Heart right ventricle (tissue), 16 donors: ENCODE measurements at regions of chr1 and their contacts with region 1.

Region 1: DNA sequence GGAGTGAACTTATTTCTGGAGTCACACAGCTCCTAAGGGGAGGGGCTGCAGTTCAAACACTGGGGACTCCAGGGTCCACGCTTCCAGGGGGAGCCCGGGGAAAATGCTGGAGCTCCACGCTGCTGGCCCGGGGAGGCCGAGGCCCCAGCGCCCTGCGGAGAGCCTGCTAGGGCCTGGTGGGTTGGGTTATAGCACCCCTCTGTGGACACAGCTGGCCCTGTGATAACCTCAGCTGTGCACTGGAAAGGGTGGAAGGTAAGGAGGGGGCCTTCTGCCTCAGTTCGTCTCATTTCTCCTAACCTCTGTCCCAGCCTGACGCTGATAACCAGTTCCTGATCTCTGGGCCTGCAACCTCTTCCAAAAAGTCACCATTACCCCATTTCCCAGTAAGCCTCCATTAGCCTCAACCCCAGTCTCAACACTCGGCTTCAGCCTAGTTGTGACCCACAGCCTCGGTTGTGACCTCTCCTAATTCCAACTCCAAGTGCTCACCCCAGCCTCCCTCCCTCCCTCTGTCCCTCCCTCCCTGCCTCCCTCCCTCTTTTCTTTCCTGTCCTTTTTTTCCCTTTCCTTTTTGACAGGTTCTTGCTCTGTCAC is 7.1 kb downstream of the NBL1 start:
- DNase-seq: peak; percentile 66 to 70
- ATAC-seq: peak; percentile 76 to 87 (median 83)
- H3K4me3 ChIP-seq: peak overlapping the region in 4 of 10 donors; percentile 16 to 23 (median 18)
- H3K27ac ChIP-seq: peak overlapping the region; percentile 24 to 95 (median 80)
- H3K4me1 ChIP-seq: peaks cover 25 to 100% (median 65%) of the 10 kb centered on the region in 9 donors
- H3K27me3 ChIP-seq: peaks cover 0 to 8% (median 0%) of the 10 kb centered on the region in 7 donors
- CTCF ChIP-seq: peak; percentile 54 to 84 (median 77)

Region 2: GRCh38 chr1:19251305-19252196 is 399.7 kb before region 1 on chr1 and contains the starts of genes EMC1 and MRTO4:
- intact Hi-C with region 1: loop called in 5 of 10 experiments (anchors 10 kb)
- DNase-seq: peak; percentile 88 to 89
- ATAC-seq: peak; percentile 97 to 98 (median 97)
- H3K4me3 ChIP-seq: peak within 1 kb of the TSS; percentile 71 to 91 (median 84)
- H3K27ac ChIP-seq: peak within 1 kb of the TSS; percentile 87 to 99 (median 97)
- H3K4me1 ChIP-seq: peaks cover 9 to 42% (median 32%) of the 10 kb centered on the region in 9 donors
- H3K27me3 ChIP-seq: no peaks in the 10 kb centered on the region
- CTCF ChIP-seq: no peak
- total RNA-seq, gene EMC1: 23.6 to 33.2 (median 27.6) TPM
- total RNA-seq, gene MRTO4: 8.4 to 21.0 (median 12.0) TPM

Region 3: DNA sequence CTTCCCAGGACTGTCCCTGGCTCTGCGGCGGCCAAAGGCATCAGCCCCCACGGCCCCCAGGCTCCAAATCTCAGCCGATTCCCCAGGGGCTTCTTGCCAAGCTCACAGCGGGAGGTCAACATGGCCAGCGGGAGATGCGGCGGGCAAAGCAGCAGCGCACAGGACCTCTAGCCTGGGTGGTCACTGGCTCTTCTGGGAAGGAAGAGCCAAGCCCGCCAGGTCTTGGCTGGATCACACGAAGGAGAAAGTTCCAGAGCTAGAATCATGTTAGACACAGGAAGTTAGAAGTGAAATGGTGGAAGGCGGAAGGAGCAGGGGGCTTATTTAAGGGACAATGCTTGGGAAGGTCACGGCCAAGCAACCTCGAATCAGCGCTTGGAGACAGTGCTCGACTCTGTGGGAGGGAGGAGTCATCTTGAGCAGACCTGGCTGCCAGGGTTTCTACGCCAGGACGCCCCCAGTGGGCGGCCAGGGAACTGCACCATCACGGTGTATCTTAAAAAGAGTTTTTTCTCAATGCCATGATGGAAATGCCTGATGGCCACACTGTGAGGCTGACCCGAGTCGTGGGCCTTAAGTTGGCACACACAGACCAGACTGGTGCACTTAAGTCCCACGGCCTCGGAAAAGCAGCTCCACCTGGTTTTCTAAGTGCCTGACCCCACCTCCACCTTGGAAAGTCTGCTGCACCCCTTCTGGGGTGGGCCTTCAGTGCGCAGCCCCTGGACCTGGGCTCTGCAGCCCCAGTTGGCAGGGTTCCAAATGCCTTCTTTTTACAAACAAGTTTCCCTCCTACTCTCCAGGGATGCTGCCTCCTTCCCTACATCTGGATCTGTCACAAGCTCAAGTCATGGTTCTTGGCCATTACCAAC is 309.8 kb before region 1 on chr1:
- intact Hi-C with region 1: loop called (anchors 2 to 10 kb)
- DNase-seq: peak; percentile 57 to 75
- ATAC-seq: peak; percentile 23 to 62 (median 49)
- H3K4me3 ChIP-seq: no peak overlapping the region
- H3K27ac ChIP-seq: peak overlapping the region in 5 of 10 donors; percentile 7 to 41 (median 23)
- H3K4me1 ChIP-seq: peaks cover 3 to 30% (median 15%) of the 10 kb centered on the region in 9 donors
- H3K27me3 ChIP-seq: no peaks in the 10 kb centered on the region
- CTCF ChIP-seq: peak; percentile 80 to 94 (median 84)

Region 4: GRCh38 chr1:19347533-19348172 is 303.6 kb before region 1 on chr1:
- intact Hi-C with region 1: loop called in 9 of 10 experiments (anchors 2 to 5 kb)
- DNase-seq: no peak
- ATAC-seq: no peak
- H3K4me3 ChIP-seq: no peak overlapping the region
- H3K27ac ChIP-seq: peak overlapping the region in 1 of 10 donors; percentile 36
- H3K4me1 ChIP-seq: peaks cover 0 to 23% (median 6%) of the 10 kb centered on the region in 9 donors
- H3K27me3 ChIP-seq: no peaks in the 10 kb centered on the region
- CTCF ChIP-seq: no peak

Region 5: DNA sequence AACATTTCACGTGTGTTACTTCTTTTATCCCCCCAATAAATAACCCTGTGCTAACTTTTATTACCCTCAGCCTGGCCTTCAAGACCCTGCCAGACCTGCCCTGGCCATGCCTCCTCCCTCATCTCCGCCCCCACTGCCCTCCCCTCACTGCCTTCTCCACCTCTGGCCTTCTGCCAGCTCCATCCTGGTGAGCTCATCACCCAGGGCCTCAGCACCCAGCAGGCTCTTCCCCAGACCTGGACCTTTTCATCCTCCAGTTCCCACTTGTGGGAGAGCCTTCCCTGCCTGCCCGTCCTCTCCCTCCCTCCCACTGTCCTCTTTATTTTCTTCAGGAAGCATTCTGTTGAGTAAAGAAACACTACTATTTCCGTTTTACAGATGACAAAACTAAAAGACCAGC is 267.1 kb before region 1 on chr1:
- intact Hi-C with region 1: loop called in 2 of 10 experiments (anchors 5 to 10 kb)
- DNase-seq: peak in 1 of 2 donors; percentile 60
- ATAC-seq: peak in 6 of 8 donors; percentile 39 to 76 (median 59)
- H3K4me3 ChIP-seq: no peak overlapping the region
- H3K27ac ChIP-seq: peak overlapping the region in 3 of 10 donors; percentile 12 to 17 (median 16)
- H3K4me1 ChIP-seq: peaks cover 12 to 51% (median 35%) of the 10 kb centered on the region in 9 donors
- H3K27me3 ChIP-seq: no peaks in the 10 kb centered on the region
- CTCF ChIP-seq: no peak

Region 6: GRCh38 chr1:19390901-19391595 is 260.2 kb before region 1 on chr1:
- intact Hi-C with region 1: loop called (anchors 2 to 10 kb)
- DNase-seq: peak; percentile 53 to 73
- ATAC-seq: peak in 7 of 8 donors; percentile 30 to 66 (median 58)
- H3K4me3 ChIP-seq: peak overlapping the region in 6 of 10 donors; percentile 22 to 39 (median 26)
- H3K27ac ChIP-seq: peak overlapping the region; percentile 2 to 87 (median 70)
- H3K4me1 ChIP-seq: peaks cover 16 to 87% (median 59%) of the 10 kb centered on the region in 9 donors
- H3K27me3 ChIP-seq: no peaks in the 10 kb centered on the region
- CTCF ChIP-seq: peak; percentile 56 to 94 (median 78)

Region 7: DNA sequence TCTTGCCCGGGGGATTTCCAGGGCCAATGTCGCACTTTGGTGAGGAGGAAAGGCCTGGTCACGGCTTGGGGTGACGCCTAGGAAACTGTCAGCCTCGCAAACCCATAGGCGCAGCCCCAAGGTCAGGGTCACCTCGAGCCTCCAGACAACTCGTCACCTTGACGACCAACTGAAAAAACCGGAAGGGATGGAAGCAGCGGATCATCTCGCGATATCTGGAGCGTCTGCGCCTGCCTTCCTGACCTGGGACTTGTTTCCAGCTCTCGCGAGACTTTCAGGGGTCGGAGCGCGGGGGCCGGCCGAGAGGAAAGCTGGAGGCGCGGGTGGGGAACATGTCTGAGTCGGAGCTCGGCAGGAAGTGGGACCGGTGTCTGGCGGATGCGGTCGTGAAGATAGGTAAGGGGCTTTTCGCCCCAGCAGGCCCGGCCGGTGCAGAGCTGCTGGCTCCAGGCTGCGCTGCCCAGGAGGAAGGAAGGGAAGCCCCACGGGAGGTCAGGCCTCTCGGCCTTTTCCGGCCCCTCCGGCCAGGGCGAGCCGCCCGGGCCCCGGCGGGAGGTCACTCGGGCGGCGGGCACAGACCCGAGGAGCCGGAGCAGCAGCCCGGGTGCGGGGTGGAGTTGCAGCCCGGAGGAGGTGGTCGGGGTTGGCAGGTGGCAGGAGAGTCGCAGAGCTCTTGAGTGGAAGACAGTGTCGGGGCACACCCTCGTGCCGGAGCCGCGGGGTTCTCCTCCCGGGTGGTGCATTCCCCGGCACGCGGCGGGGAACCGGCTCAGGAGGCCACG is 54.3 kb before region 1 on chr1:
- intact Hi-C with region 1: loop called in 4 of 10 experiments (anchors 2 to 5 kb)
- DNase-seq: peak; percentile 94 to 98
- ATAC-seq: peak; percentile 94 to 97 (median 96)
- H3K4me3 ChIP-seq: peak overlapping the region; percentile 53 to 98 (median 87)
- H3K27ac ChIP-seq: peak overlapping the region; percentile 71 to 99 (median 97)
- H3K4me1 ChIP-seq: peaks cover 0 to 51% (median 41%) of the 10 kb centered on the region in 9 donors
- H3K27me3 ChIP-seq: no peaks in the 10 kb centered on the region
- CTCF ChIP-seq: no peak